ENCODE measurements at regions of chr5 and their contacts with region 1.

Region 1: DNA sequence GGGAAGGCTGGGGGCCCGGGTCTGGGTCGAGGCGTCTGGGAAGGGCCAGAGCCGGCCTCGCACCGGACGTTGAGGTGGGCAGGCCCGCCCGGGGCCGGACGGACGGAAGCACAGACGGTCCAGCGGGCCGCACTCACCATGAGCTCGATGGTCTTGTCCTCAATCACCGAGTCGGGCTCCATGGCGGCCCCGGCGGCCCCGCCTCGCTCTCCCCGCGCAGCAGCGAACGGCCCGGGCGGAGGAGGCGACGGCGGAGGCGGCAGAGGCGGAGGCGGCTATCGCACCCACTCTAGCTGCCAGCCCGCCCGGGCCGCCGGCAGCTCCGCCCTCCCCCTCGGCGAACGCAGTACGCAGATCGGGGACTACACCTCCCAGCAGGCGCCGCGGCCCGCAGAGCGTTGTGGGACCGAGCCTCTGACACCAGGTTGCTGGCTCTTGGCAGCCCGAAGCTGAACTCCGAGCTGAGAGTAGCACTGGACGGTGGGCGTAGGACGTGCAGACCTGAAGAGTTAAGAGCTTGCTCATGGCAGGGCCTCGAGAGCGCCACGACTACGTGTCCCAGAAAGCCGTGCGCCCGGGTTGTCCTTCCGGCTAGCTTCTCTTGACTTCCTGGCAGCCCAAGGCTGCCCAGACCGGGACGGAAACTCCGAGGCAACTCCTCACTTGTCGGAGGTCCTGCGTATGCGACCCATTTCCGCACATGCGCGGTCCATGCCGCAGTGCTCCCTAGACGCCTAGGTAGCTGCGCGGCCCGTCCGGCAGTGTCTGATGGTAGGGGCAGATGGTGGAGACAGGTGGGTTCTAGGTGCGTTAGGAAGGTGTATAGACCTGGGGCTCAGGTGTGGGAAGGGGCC is at the start of gene FBXW11:
- DNase-seq: peak; percentile 97
- ATAC-seq: peak; percentile 85
- H3K4me3 ChIP-seq: peak within 1 kb of the TSS; percentile 77 to 94 (median 90)
- H3K4me3 Mint-ChIP-seq: peak within 1 kb of the TSS; percentile 92
- H3K27ac ChIP-seq: peak within 1 kb of the TSS; percentile 96 to 97
- H3K27ac Mint-ChIP-seq: peak within 1 kb of the TSS; percentile 93
- H3K4me1 ChIP-seq: peaks cover 44 to 47% of the 10 kb centered on the region in 2 donors
- H3K4me1 Mint-ChIP-seq: peaks cover 49% of the 10 kb centered on the region
- H3K27me3 ChIP-seq: no peaks in the 10 kb centered on the region
- H3K27me3 Mint-ChIP-seq: no peaks in the 10 kb centered on the region
- CTCF ChIP-seq: no peak
- total RNA-seq, gene FBXW11: 62.4 and 64.8 TPM in 2 replicates

Region 2: DNA sequence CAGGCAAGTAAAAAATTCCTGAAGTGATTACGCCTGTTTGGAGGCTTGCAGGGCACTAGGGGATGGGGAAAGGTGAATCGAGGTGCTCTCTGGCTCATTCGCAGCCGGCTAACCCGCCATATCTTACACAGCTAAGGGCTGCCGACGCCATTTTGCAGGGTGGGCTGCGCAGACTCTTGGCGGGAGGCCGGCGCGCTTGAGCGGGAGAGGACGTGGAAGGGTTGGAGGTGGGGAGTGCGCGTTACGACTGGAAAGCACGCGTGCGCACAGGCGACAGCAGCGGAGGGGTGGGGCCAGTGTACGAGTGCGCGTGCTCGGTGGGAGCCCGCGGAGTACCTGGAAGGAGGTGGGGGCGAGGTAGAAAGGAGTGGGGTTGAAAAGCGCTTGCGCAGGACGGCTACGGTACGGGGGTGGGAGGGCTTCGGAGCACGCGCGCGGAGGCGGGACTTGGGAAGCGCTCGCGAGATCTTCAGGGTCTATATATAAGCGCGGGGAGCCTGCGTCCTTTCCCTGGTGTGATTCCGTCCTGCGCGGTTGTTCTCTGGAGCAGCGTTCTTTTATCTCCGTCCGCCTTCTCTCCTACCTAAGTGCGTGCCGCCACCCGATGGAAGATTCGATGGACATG is 619.1 kb before region 1 on chr5 and contains the start of gene NPM1:
- CTCF ChIA-PET with region 1: no interaction called
- POLR2A ChIA-PET with region 1: interaction called, 3 read pairs
- intact Hi-C with region 1: loop called (anchors 2 kb)
- DNase-seq: peak; percentile 99
- ATAC-seq: peak; percentile 87
- H3K4me3 ChIP-seq: peak within 1 kb of the TSS; percentile 67 to 82 (median 75)
- H3K4me3 Mint-ChIP-seq: peak within 1 kb of the TSS; percentile 100
- H3K27ac ChIP-seq: peak within 1 kb of the TSS; percentile 74 to 87
- H3K27ac Mint-ChIP-seq: peak within 1 kb of the TSS; percentile 99
- H3K4me1 ChIP-seq: peaks cover 39 to 41% of the 10 kb centered on the region in 2 donors
- H3K4me1 Mint-ChIP-seq: peaks cover 51% of the 10 kb centered on the region
- H3K27me3 ChIP-seq: no peaks in the 10 kb centered on the region
- H3K27me3 Mint-ChIP-seq: peaks cover under 1% of the 10 kb centered on the region
- CTCF ChIP-seq: no peak
- total RNA-seq, gene NPM1: 819 and 920 TPM in 2 replicates

Region 3: GRCh38 chr5:171961117-171961516 is 45.4 kb before region 1 on chr5:
- CTCF ChIA-PET with region 1: no interaction called
- POLR2A ChIA-PET with region 1: no interaction called
- intact Hi-C with region 1: loop called (anchors 5 kb)
- DNase-seq: no peak
- ATAC-seq: no peak
- H3K4me3 ChIP-seq: no peak overlapping the region
- H3K4me3 Mint-ChIP-seq: peak overlapping the region; percentile 44
- H3K27ac ChIP-seq: no peak overlapping the region
- H3K27ac Mint-ChIP-seq: peak overlapping the region; percentile 50
- H3K4me1 ChIP-seq: peaks cover 37 to 73% of the 10 kb centered on the region in 2 donors
- H3K4me1 Mint-ChIP-seq: peaks cover 79% of the 10 kb centered on the region
- H3K27me3 ChIP-seq: no peaks in the 10 kb centered on the region
- H3K27me3 Mint-ChIP-seq: no peaks in the 10 kb centered on the region
- CTCF ChIP-seq: no peak

Region 4: DNA sequence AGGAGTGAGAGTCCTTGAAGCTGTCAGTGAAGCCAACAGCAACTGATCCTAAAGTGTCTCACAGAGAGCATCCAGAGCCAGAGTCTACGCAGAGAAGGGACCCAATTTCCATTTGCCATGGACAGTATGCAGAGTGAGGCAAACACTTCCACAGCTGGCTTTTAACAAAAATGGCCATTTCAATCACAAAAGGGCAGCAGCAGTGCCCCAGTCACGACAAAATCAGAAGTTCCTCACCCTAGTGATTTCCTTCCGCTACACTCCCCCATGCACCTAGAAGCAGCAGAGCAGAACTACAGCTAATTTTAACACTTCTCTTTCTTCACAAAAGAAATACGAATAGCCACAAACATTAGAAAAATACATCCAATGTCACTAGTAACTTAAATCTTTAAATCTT is 28.0 kb before region 1 on chr5:
- CTCF ChIA-PET with region 1: interaction called, 6 read pairs
- POLR2A ChIA-PET with region 1: interaction called, 4 read pairs
- intact Hi-C with region 1: loop called (anchors 2 kb)
- DNase-seq: peak; percentile 66
- ATAC-seq: peak; percentile 76
- H3K4me3 ChIP-seq: peak overlapping the region; percentile 16 to 60 (median 30)
- H3K4me3 Mint-ChIP-seq: peak overlapping the region; percentile 56
- H3K27ac ChIP-seq: peak overlapping the region; percentile 69 to 83
- H3K27ac Mint-ChIP-seq: peak overlapping the region; percentile 88
- H3K4me1 ChIP-seq: peaks cover 73 to 76% of the 10 kb centered on the region in 2 donors
- H3K4me1 Mint-ChIP-seq: peaks cover 74% of the 10 kb centered on the region
- H3K27me3 ChIP-seq: no peaks in the 10 kb centered on the region
- H3K27me3 Mint-ChIP-seq: no peaks in the 10 kb centered on the region
- CTCF ChIP-seq: no peak

Region 5: GRCh38 chr5:172044631-172045314 is 38.2 kb after region 1 on chr5:
- CTCF ChIA-PET with region 1: interaction called, 7 read pairs
- POLR2A ChIA-PET with region 1: no interaction called
- intact Hi-C with region 1: loop called (anchors 5 kb)
- DNase-seq: no peak
- ATAC-seq: no peak
- H3K4me3 ChIP-seq: no peak overlapping the region
- H3K4me3 Mint-ChIP-seq: no peak overlapping the region
- H3K27ac ChIP-seq: peak overlapping the region in 1 of 2 donors; percentile 64
- H3K27ac Mint-ChIP-seq: peak overlapping the region; percentile 59
- H3K4me1 ChIP-seq: peaks cover 0 to 7% of the 10 kb centered on the region in 2 donors
- H3K4me1 Mint-ChIP-seq: peaks cover 6% of the 10 kb centered on the region
- H3K27me3 ChIP-seq: no peaks in the 10 kb centered on the region
- H3K27me3 Mint-ChIP-seq: no peaks in the 10 kb centered on the region
- CTCF ChIP-seq: no peak

Region 6: DNA sequence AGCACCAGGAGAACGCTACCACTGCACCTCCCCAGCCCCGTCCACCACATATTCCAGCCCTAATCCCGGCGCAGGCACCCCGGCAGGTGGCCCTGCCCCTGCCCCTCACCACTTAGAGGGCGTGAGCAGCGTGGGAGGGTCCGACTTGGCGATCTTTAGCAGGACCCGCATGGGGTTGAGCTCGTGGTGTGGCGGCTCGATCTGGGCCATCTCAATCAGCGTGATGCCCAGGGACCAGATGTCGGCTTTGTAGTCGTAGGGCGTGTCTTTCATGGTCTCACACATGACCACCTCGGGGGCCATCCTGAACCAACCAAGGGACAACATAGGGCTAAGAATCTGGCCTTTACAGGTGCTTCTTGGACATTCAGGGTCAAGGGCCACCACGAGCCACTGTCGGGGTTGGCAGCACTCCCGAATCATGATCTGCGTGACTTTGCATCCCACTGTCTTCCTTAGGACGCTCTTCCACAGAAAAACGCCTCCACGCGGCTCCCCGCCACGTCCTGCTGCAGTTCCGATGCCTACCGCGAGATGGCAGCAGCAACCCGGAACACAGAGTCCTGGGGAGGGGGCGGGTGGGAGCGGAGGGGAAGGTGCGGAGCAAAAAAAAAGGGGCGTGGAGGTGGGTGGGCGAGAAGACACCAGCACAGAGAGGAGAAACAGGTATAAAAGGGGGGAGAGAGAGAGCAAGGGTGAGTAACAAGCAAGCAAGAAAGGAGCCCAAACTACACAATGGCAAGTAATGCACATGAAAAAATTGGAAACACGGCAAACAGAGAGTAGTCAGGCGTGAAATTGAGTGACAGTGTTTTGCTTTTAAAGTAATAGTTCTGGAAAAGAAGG is 100.2 kb after region 1 on chr5:
- CTCF ChIA-PET with region 1: interaction called, 4 read pairs
- POLR2A ChIA-PET with region 1: interaction called, 3 read pairs
- intact Hi-C with region 1: loop called (anchors 1 kb)
- DNase-seq: peak; percentile 76
- ATAC-seq: no peak
- H3K4me3 ChIP-seq: no peak overlapping the region
- H3K4me3 Mint-ChIP-seq: no peak overlapping the region
- H3K27ac ChIP-seq: peak overlapping the region in 1 of 2 donors; percentile 41
- H3K27ac Mint-ChIP-seq: peak overlapping the region; percentile 70
- H3K4me1 ChIP-seq: peaks cover 31 to 40% of the 10 kb centered on the region in 2 donors
- H3K4me1 Mint-ChIP-seq: peaks cover 35% of the 10 kb centered on the region
- H3K27me3 ChIP-seq: no peaks in the 10 kb centered on the region
- H3K27me3 Mint-ChIP-seq: no peaks in the 10 kb centered on the region
- CTCF ChIP-seq: peak; percentile 92

Region 7: GRCh38 chr5:173144200-173145176 is 1137.9 kb after region 1 on chr5 and contains the start of gene BNIP1:
- CTCF ChIA-PET with region 1: no interaction called
- POLR2A ChIA-PET with region 1: no interaction called
- intact Hi-C with region 1: loop called (anchors 10 kb)
- DNase-seq: peak; percentile 97
- ATAC-seq: peak; percentile 90
- H3K4me3 ChIP-seq: peak within 1 kb of the TSS; percentile 79 to 100 (median 97)
- H3K4me3 Mint-ChIP-seq: peak within 1 kb of the TSS; percentile 98
- H3K27ac ChIP-seq: peak within 1 kb of the TSS; percentile 90 to 95
- H3K27ac Mint-ChIP-seq: peak within 1 kb of the TSS; percentile 98
- H3K4me1 ChIP-seq: peaks cover 3 to 8% of the 10 kb centered on the region in 2 donors
- H3K4me1 Mint-ChIP-seq: peaks cover 8% of the 10 kb centered on the region
- H3K27me3 ChIP-seq: no peaks in the 10 kb centered on the region
- H3K27me3 Mint-ChIP-seq: no peaks in the 10 kb centered on the region
- CTCF ChIP-seq: peak; percentile 81
- total RNA-seq, gene BNIP1: 8.0 and 10.0 TPM in 2 replicates